Endothelial cell of umbilical vein (primary cell): ENCODE measurements at regions of chr10 and their contacts with region 1.

Region 1: DNA sequence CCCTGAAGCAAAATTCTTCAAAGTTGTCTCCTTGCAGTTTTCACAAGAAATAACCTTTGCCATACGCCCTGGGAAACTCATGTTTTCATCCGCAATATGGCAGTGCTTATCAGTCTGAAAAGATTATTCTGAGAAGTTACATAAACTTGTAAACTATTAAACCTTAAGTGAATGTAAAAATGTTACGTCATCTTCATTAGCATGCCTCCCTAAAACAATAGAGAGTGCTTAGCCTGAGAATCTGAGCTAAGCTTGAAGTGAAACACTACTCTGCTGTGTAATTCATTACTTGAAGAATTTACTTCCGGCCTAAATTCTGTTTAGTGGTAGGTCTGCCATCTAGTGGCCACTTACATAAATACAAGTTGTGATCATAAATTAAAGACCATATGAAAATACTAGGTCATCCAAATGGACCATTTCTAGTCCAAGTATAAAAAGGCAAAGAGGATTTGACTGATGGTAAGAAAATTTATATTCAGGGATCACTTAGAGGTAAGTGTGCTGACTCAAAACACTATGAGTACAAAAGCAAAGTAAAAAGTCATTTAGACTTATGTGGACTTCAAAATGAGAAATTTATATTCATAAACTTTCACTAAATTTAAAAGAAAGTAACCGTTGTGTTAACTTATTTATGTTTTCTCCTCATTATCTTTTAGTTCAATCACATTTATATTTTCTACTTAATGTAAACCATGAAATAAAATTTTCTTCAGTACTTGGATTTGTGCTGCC is 745.1 kb upstream of the LRRTM3 start:
- DNase-seq: peak; percentile 71
- H3K4me3 ChIP-seq: no peak overlapping the region
- H3K27ac ChIP-seq: no peak overlapping the region
- H3K4me1 ChIP-seq: no peaks in the 10 kb centered on the region
- H3K27me3 ChIP-seq: no peaks in the 10 kb centered on the region
- CTCF ChIP-seq: peak; percentile 18 to 33
- POLR2A ChIP-seq: no peak

Region 2: DNA sequence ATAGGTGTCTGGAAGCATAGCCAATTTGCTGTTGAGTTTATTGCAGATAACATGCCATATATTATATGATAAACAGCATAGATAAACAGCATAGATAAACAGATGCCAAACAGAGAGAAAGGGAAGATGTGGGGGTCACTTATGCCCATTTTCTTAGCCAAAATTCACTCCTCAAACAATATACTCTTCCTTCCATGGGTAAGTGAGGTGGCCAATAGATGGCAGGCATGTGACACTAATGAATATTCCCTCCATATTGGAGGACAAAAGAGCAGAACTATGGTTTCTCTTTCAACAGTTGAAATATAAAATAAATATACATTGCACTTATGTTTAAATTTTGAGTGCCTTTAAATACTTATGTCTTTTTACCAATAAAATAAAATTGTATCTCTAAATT is 1446.8 kb before region 1 on chr10:
- CTCF ChIA-PET with region 1: interaction called, 8 read pairs
- POLR2A ChIA-PET with region 1: no interaction called
- dilution Hi-C with region 1: no loop called
- intact Hi-C with region 1: loop called (anchors 1 kb)
- DNase-seq: peak; percentile 69
- H3K4me3 ChIP-seq: no peak overlapping the region
- H3K27ac ChIP-seq: no peak overlapping the region
- H3K4me1 ChIP-seq: no peaks in the 10 kb centered on the region
- H3K27me3 ChIP-seq: no peaks in the 10 kb centered on the region
- CTCF ChIP-seq: peak; percentile 41 to 54
- POLR2A ChIP-seq: no peak

Region 3: GRCh38 chr10:64977915-64978314 is 1202.8 kb before region 1 on chr10:
- CTCF ChIA-PET with region 1: interaction called, 25 read pairs
- POLR2A ChIA-PET with region 1: no interaction called
- dilution Hi-C with region 1: no loop called
- intact Hi-C with region 1: loop called (anchors 1 kb)
- DNase-seq: peak; percentile 20
- H3K4me3 ChIP-seq: no peak overlapping the region
- H3K27ac ChIP-seq: no peak overlapping the region
- H3K4me1 ChIP-seq: no peaks in the 10 kb centered on the region
- H3K27me3 ChIP-seq: no peaks in the 10 kb centered on the region
- CTCF ChIP-seq: no peak
- POLR2A ChIP-seq: no peak

Region 4: GRCh38 chr10:65358565-65358964 is 822.2 kb before region 1 on chr10:
- CTCF ChIA-PET with region 1: interaction called, 18 read pairs
- POLR2A ChIA-PET with region 1: no interaction called
- dilution Hi-C with region 1: no loop called
- intact Hi-C with region 1: loop called (anchors 5 kb)
- DNase-seq: peak; percentile 52
- H3K4me3 ChIP-seq: no peak overlapping the region
- H3K27ac ChIP-seq: no peak overlapping the region
- H3K4me1 ChIP-seq: peaks cover 16% of the 10 kb centered on the region
- H3K27me3 ChIP-seq: no peaks in the 10 kb centered on the region
- CTCF ChIP-seq: peak; percentile 36 to 68
- POLR2A ChIP-seq: no peak

Region 5: DNA sequence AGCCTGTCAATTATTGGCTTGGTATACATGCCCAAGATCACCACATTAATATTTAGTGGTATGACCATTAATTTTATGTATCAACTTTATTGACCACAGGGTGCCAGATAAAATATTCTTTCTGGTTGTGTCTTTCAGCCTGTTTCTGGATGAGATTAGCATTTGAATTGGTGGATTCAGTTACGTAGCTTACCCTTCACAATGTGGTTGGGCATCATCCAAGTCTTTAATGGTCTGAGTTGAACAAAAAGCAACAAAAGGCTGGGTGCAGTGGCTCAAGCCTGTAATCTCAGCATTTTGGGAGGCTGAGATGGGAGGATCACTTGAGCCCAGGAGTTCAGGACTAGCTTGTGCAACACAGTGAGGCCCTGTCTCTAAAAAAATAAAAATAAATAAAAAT is 42.9 kb after region 1 on chr10:
- CTCF ChIA-PET with region 1: no interaction called
- POLR2A ChIA-PET with region 1: no interaction called
- dilution Hi-C with region 1: no loop called
- intact Hi-C with region 1: no loop called
- DNase-seq: no peak
- H3K4me3 ChIP-seq: no peak overlapping the region
- H3K27ac ChIP-seq: no peak overlapping the region
- H3K4me1 ChIP-seq: no peaks in the 10 kb centered on the region
- H3K27me3 ChIP-seq: no peaks in the 10 kb centered on the region
- CTCF ChIP-seq: no peak
- POLR2A ChIP-seq: no peak

Region 6: GRCh38 chr10:66931340-66931948 is 750.7 kb after region 1 on chr10:
- CTCF ChIA-PET with region 1: interaction called, 3 read pairs
- POLR2A ChIA-PET with region 1: no interaction called
- dilution Hi-C with region 1: no loop called
- intact Hi-C with region 1: loop called (anchors 10 kb)
- DNase-seq: peak; percentile 53
- H3K4me3 ChIP-seq: no peak overlapping the region
- H3K27ac ChIP-seq: no peak overlapping the region
- H3K4me1 ChIP-seq: no peaks in the 10 kb centered on the region
- H3K27me3 ChIP-seq: peaks cover 22 to 25% of the 10 kb centered on the region in 2 experiments
- CTCF ChIP-seq: peak; percentile 35 to 49
- POLR2A ChIP-seq: no peak

Region 7: DNA sequence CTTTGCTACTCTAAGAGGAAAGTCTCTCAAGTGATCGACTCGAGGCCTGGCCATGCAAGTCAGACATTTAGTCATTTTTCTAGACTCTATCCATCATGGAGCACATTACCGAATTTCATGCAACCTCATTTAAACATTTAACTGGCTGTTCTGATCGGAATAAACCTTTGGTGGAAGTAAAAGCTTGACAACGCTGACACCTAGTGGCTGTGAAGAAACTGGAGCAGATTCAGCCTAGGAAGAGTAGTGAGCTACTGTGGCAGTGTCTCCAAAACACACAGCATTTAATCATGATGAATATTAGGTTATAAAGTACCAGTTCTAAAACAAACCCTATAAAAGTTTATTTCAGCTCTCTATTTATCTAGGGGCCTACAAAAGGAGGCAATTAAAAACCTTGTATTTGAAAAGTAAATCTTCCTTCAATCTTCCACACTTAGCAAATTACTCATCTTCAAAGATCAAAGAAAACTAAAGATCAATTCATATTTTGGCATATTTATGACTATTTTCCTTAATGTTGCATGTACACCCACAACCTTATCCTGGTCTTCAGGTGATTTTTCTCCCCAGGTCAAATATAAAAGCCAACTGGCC is 1340.3 kb after region 1 on chr10:
- CTCF ChIA-PET with region 1: interaction called, 4 read pairs
- POLR2A ChIA-PET with region 1: no interaction called
- dilution Hi-C with region 1: no loop called
- intact Hi-C with region 1: loop called (anchors 2 kb)
- DNase-seq: peak; percentile 54
- H3K4me3 ChIP-seq: no peak overlapping the region
- H3K27ac ChIP-seq: no peak overlapping the region
- H3K4me1 ChIP-seq: no peaks in the 10 kb centered on the region
- H3K27me3 ChIP-seq: no peaks in the 10 kb centered on the region
- CTCF ChIP-seq: peak; percentile 63 to 65
- POLR2A ChIP-seq: no peak